Mammary epithelial cell (primary cell): ENCODE measurements at regions of chr1 and their contacts with region 1.

Region 1: GRCh38 chr1:119225831-119226230 is 85.4 kb upstream of the WARS2 start:
- DNase-seq: no peak
- H3K4me3 ChIP-seq: no peak overlapping the region
- H3K27ac ChIP-seq: no peak overlapping the region
- H3K4me1 ChIP-seq: no peaks in the 10 kb centered on the region
- H3K27me3 ChIP-seq: no peaks in the 10 kb centered on the region
- CTCF ChIP-seq: peak; percentile 27 to 59

Region 2: GRCh38 chr1:119046785-119047438 is 178.9 kb before region 1 on chr1:
- CTCF ChIA-PET with region 1: no interaction called
- dilution Hi-C with region 1: no loop called
- in situ Hi-C with region 1: no loop called
- intact Hi-C with region 1: no loop called
- DNase-seq: peak; percentile 8
- H3K4me3 ChIP-seq: no peak overlapping the region
- H3K27ac ChIP-seq: peak overlapping the region; percentile 39
- H3K4me1 ChIP-seq: peaks cover 14% of the 10 kb centered on the region
- H3K27me3 ChIP-seq: no peaks in the 10 kb centered on the region
- CTCF ChIP-seq: no peak

Region 3: DNA sequence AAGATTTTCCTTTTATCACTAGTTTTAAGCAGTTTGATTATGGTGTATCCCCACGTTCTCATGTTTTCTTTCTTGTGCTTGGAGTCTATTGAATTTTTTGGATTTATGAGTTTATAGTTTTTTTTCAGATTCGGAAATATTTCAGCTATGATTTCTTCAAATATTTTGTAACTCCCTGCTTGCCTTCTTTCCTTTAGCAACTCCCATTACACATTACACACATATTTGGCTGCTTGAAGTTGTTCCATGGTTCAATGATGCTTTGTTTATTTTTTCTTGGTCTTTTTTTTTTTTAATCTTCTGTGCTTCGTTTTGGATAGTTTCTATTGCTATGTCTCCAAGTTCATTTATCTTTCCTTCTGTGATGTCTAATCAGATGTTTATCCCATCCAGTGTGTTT is 36.9 kb before region 1 on chr1:
- CTCF ChIA-PET with region 1: no interaction called
- dilution Hi-C with region 1: loop called (anchors 5 kb)
- in situ Hi-C with region 1: no loop called
- intact Hi-C with region 1: no loop called
- DNase-seq: no peak
- H3K4me3 ChIP-seq: no peak overlapping the region
- H3K27ac ChIP-seq: no peak overlapping the region
- H3K4me1 ChIP-seq: no peaks in the 10 kb centered on the region
- H3K27me3 ChIP-seq: no peaks in the 10 kb centered on the region
- CTCF ChIP-seq: no peak

Region 4: GRCh38 chr1:119204197-119204960 is 21.5 kb before region 1 on chr1:
- CTCF ChIA-PET with region 1: no interaction called
- dilution Hi-C with region 1: no loop called
- in situ Hi-C with region 1: no loop called
- intact Hi-C with region 1: no loop called
- DNase-seq: no peak
- H3K4me3 ChIP-seq: no peak overlapping the region
- H3K27ac ChIP-seq: no peak overlapping the region
- H3K4me1 ChIP-seq: no peaks in the 10 kb centered on the region
- H3K27me3 ChIP-seq: no peaks in the 10 kb centered on the region
- CTCF ChIP-seq: no peak